ENCODE measurements at regions of chr3 and their contacts with region 1.

Region 1: DNA sequence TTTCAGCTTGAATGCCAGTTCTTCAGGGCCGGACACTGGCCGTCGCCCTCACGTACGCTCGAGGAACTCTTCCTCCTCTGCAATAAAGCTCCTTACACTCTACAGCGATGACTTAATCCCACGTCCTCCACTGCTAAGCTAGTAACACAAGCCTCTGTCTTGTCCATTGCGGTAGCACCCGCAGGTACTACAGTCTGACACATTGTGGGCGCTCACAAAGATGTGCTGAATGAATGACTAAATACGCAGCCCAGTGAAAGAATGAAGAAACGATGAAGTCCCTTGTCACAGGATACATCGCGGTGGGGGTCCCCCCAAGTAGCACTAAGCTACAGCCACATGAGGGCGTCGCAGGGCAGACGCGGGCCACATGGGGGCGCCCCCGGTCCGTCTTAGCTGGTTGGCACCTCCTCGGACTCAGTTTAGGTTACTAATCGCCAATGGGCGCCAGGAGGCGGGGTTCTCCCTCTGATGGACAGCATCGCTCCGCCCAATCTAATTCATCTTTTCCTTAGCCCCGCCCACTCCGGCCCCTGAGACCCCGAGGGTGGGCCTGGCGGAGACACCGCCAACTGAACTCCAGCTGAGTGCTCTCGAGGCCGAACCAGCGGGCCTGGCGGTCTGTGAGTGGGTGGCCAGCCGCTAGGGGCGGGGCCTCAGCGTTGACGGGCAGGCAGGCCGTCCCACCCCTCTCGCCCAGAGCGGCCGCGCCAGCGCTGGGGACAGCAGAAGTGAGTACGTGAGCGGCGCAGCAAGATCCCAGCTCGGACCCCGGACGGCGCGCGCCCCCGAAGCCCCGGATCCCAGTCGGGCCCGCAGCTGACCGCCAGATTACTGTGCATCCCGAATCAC is at the start of gene EPHB3:
- DNase-seq: peak; percentile 94
- ATAC-seq: peak; percentile 89
- H3K4me3 Mint-ChIP-seq: peak within 1 kb of the TSS; percentile 23
- H3K27ac Mint-ChIP-seq: no peak within 1 kb of the TSS
- H3K4me1 Mint-ChIP-seq: peaks cover 9% of the 10 kb centered on the region
- H3K27me3 Mint-ChIP-seq: peaks cover 73% of the 10 kb centered on the region
- total RNA-seq, gene EPHB3: not detected

Region 2: GRCh38 chr3:184642631-184643285 is 81.5 kb after region 1 on chr3:
- CTCF ChIA-PET with region 1: interaction called, 10 read pairs
- DNase-seq: no peak
- ATAC-seq: no peak
- H3K4me3 Mint-ChIP-seq: no peak overlapping the region
- H3K27ac Mint-ChIP-seq: no peak overlapping the region
- H3K4me1 Mint-ChIP-seq: peaks cover 2% of the 10 kb centered on the region
- H3K27me3 Mint-ChIP-seq: peaks cover 6% of the 10 kb centered on the region

Region 3: DNA sequence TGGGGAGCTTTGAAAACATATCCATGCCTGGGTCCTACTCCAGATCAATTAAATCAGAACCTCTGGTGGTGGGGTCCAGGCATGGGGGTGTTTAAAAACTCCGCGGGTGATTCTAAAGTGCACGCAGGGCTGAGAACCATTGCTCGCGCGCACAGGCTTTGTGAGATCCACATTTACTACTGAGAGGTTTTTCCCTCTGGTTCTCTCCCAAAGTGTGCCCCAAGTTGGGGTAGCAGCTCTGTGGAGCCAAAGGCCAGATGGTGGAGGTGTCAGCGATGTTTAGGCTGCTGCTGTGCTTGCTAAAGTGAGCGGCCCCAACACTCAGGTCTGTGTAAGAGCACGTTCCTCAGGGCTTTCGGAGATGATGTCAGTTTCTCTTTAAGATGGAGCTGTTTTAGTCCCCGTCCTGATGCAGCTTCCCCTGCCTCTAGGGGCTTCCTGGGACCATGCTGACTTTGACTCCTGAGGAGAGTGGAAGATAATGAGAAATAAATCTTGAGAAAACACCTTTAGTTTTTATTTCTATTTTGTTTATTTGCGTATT is 164.0 kb after region 1 on chr3:
- CTCF ChIA-PET with region 1: interaction called, 13 read pairs
- DNase-seq: no peak
- ATAC-seq: no peak
- H3K4me3 Mint-ChIP-seq: no peak overlapping the region
- H3K27ac Mint-ChIP-seq: no peak overlapping the region
- H3K4me1 Mint-ChIP-seq: no peaks in the 10 kb centered on the region
- H3K27me3 Mint-ChIP-seq: peaks cover 18% of the 10 kb centered on the region

Region 4: GRCh38 chr3:184765730-184766074 is 204.4 kb after region 1 on chr3:
- CTCF ChIA-PET with region 1: interaction called, 16 read pairs
- DNase-seq: no peak
- ATAC-seq: no peak
- H3K4me3 Mint-ChIP-seq: no peak overlapping the region
- H3K27ac Mint-ChIP-seq: no peak overlapping the region
- H3K4me1 Mint-ChIP-seq: peaks cover 7% of the 10 kb centered on the region
- H3K27me3 Mint-ChIP-seq: peaks cover 13% of the 10 kb centered on the region

Measured in activated CD8-positive, alpha-beta memory T cell treated with anti-CD3 and anti-CD28 coated beads, Interleukin-2, amount 10 ng/mL, durations not matched to agents 7 days and 5 days (primary cell).